Right lobe of liver (tissue), 6 donors: ENCODE measurements at regions of chr6 and their contacts with region 1.

Region 1: GRCh38 chr6:71383901-71384489 is 95.4 kb downstream of the OGFRL1 start:
- DNase-seq: no peak
- ATAC-seq: peak; percentile 27 to 61 (median 60)
- H3K4me3 ChIP-seq: no peak overlapping the region
- H3K27ac ChIP-seq: no peak overlapping the region
- H3K4me1 ChIP-seq: peaks cover 0 to 31% (median 10%) of the 10 kb centered on the region in 4 donors
- H3K27me3 ChIP-seq: no peaks in the 10 kb centered on the region
- CTCF ChIP-seq: peak; percentile 63 to 68 (median 65)
- POLR2A ChIP-seq: no peak

Region 2: GRCh38 chr6:71404145-71404966 is 20.4 kb after region 1 on chr6:
- intact Hi-C with region 1: no loop called
- DNase-seq: no peak
- ATAC-seq: peak; percentile 85 to 95 (median 93)
- H3K4me3 ChIP-seq: peak overlapping the region in 1 of 3 donors; percentile 0
- H3K27ac ChIP-seq: peak overlapping the region in 2 of 3 donors; percentile 7 to 57
- H3K4me1 ChIP-seq: peaks cover 0 to 19% (median 4%) of the 10 kb centered on the region in 4 donors
- H3K27me3 ChIP-seq: no peaks in the 10 kb centered on the region
- CTCF ChIP-seq: no peak
- POLR2A ChIP-seq: no peak

Region 3: DNA sequence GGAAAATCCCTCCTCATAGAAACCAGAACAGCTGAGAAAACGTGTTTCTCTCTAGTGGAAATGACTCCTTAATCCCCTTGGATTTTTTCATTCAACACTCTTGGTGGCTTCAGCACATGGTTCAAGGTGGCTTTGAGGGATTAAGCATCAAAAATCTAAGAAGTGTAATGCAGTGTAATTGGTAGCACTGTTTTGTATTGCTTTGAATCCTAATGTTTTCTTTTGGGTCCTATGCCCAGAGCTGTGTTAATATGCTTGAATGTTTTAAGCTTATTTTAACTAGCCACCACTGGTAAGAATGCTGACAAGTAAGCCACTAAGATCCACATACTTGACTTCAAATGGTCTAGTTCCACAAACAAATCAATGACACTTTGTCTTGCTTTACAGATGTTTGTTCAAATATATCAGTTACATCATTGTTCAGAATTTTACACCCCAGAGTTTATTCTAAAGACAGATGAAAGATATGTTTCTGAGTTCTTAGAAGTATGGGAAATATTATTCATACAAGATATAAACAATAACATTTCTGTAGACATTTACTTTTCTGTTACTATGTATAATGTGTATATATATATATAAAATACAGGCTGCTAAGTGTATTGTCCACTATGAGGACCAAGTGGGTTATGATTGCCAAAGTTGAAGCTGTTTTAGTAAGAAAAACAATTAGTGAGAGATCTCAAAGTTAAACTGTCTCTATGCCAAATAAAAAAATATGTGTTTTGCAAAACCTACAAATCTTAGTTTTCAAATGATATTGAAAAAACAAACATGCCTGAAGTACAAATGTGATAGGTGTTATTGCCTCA is 125.4 kb after region 1 on chr6:
- intact Hi-C with region 1: loop called in 1 of 2 experiments (anchors 10 kb)
- DNase-seq: no peak
- ATAC-seq: no peak
- H3K4me3 ChIP-seq: no peak overlapping the region
- H3K27ac ChIP-seq: no peak overlapping the region
- H3K4me1 ChIP-seq: no peaks in the 10 kb centered on the region
- H3K27me3 ChIP-seq: no peaks in the 10 kb centered on the region
- CTCF ChIP-seq: no peak
- POLR2A ChIP-seq: no peak